Heart left ventricle (tissue), 16 donors: ENCODE measurements at regions of chr1 and their contacts with region 1.

Region 1: GRCh38 chr1:110487726-110488125 is 31.2 kb downstream of the KCNA10 start:
- DNase-seq: no peak
- ATAC-seq: no peak
- H3K4me3 ChIP-seq: no peak overlapping the region
- H3K27ac ChIP-seq: no peak overlapping the region
- H3K4me1 ChIP-seq: peaks cover 0 to 10% (median 1%) of the 10 kb centered on the region in 12 donors
- H3K27me3 ChIP-seq: peaks cover 0 to 3% (median 0%) of the 10 kb centered on the region in 9 donors
- CTCF ChIP-seq: no peak
- POLR2A ChIP-seq: no peak

Region 2: GRCh38 chr1:110235834-110236682 is 251.7 kb before region 1 on chr1:
- intact Hi-C with region 1: no loop called
- DNase-seq: peak in 1 of 5 donors; percentile 20
- ATAC-seq: peak in 2 of 4 donors; percentile 7 to 21
- H3K4me3 ChIP-seq: no peak overlapping the region
- H3K27ac ChIP-seq: peak overlapping the region in 6 of 12 donors; percentile 4 to 69 (median 18)
- H3K4me1 ChIP-seq: peaks cover 0 to 39% (median 11%) of the 10 kb centered on the region in 12 donors
- H3K27me3 ChIP-seq: no peaks in the 10 kb centered on the region
- CTCF ChIP-seq: no peak
- POLR2A ChIP-seq: no peak

Region 3: DNA sequence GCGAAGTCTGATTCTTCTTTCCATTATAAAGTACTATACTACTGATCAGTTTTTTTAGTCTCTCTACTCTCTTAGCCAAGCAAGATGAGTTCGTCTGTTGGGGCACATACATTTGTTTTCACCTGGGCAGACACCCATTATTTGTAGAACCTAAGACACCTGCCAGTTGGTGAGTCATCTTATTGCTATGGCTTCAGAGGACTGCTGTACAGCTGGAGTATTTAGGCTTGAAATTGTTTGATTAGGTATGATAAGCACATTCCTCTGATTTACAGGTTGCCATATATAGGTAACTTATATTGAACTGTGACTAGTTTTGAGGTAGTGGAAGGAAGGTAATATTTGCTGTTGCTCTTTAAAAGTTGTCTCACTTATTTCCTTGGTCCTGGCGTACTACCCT is 131.3 kb before region 1 on chr1:
- intact Hi-C with region 1: no loop called
- DNase-seq: no peak
- ATAC-seq: no peak
- H3K4me3 ChIP-seq: no peak overlapping the region
- H3K27ac ChIP-seq: no peak overlapping the region
- H3K4me1 ChIP-seq: peaks cover 0 to 19% (median under 1%) of the 10 kb centered on the region in 12 donors
- H3K27me3 ChIP-seq: no peaks in the 10 kb centered on the region
- CTCF ChIP-seq: no peak
- POLR2A ChIP-seq: no peak

Region 4: DNA sequence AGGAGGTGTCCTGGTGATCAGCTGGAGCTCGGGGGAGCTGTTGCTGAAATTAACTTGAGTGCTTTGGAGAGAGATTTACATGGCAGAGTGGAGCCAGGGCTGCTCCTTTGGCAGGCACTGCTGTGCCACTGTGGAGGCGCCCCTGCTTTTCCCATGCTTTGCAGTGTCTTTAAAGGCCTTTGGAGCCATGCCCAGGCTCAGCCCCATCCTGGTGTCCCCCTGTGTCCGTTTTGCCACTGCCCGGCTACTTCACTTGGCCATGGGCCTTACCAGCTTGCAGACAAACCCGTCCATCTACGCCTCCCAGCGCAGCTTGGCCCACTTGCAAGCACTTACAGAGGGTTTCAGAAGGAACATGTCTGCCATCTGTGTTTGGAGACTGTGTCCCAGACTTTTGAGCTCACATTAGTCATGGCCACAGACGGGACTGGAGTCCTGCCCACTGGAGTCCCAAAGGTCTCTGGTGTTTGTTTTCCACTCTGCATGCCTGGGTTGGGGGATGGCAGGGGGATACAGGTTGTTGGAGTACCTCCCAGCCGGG is 62.0 kb before region 1 on chr1:
- intact Hi-C with region 1: loop called in 1 of 10 experiments (anchors 5 kb)
- DNase-seq: peak in 3 of 5 donors; percentile 20 to 72 (median 60)
- ATAC-seq: peak; percentile 58 to 83 (median 68)
- H3K4me3 ChIP-seq: no peak overlapping the region
- H3K27ac ChIP-seq: peak overlapping the region in 11 of 12 donors; percentile 6 to 70 (median 32)
- H3K4me1 ChIP-seq: peaks cover 0 to 15% (median 9%) of the 10 kb centered on the region in 12 donors
- H3K27me3 ChIP-seq: no peaks in the 10 kb centered on the region
- CTCF ChIP-seq: no peak
- POLR2A ChIP-seq: no peak

Region 5: DNA sequence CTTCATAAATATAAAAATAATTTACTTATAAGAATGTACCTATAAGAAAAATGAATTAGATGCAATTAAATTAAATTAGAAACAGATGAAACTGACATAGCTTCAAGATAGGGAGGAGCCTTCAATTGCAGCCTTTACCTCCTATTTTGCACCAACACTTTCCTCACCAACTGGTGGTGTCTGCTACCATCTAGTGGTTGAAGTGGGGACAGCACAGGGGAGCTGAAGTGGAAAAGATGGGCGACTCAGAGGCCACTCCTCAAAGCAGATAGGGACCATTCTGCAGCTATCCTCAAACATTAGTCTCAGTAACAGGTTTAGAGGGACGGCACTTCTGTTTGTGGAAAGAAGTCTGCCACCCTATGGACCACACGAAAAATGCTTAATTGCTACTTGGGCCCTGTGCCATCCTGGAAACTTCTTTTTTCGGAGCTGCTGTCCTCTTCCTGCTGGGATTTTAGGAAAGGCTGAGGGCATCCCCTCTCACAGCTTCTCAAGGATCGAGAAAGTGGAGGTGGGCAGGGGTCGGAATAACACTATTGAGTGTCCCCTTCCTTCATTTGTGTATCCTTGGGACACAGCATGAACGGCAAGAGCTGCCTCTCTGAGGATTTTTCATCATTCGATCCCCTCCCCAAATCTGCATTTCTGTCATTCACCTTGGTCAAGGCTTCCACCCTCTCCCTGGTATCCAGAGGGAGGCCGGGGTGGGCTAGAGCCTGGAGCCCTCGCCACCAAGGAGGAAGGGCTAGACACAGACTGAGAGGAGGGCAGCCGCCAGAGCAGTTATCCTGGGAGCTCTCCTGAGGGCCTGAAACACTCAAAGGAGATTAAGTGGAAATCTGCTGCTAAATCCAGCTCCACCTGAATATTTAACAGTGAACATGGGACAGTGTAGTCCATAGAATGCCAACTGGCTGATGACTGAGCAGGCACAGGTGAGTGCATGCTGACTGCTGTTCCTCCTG is 27.2 kb before region 1 on chr1:
- intact Hi-C with region 1: no loop called
- DNase-seq: peak in 4 of 5 donors; percentile 42 to 70 (median 64)
- ATAC-seq: peak; percentile 59 to 83 (median 82)
- H3K4me3 ChIP-seq: no peak overlapping the region
- H3K27ac ChIP-seq: no peak overlapping the region
- H3K4me1 ChIP-seq: no peaks in the 10 kb centered on the region
- H3K27me3 ChIP-seq: no peaks in the 10 kb centered on the region
- CTCF ChIP-seq: peak; percentile 89 to 98 (median 94)
- POLR2A ChIP-seq: no peak